Esophagus muscularis mucosa (tissue), 4 donors: ENCODE measurements at regions of chr6 and their contacts with region 1.

Region 1: GRCh38 chr6:43369174-43370022 is at the start of gene ZNF318:
- DNase-seq: peak; percentile 98
- H3K4me3 ChIP-seq: peak within 1 kb of the TSS; percentile 78 to 96 (median 89)
- H3K27ac ChIP-seq: peak within 1 kb of the TSS; percentile 84 to 91 (median 90)
- H3K4me1 ChIP-seq: peaks cover 18 to 37% (median 30%) of the 10 kb centered on the region in 4 donors
- H3K27me3 ChIP-seq: peaks cover 0 to 4% (median 0%) of the 10 kb centered on the region in 4 donors
- CTCF ChIP-seq: peak in 1 of 3 experiments; percentile 8
- EP300 ChIP-seq: no peak
- POLR2A ChIP-seq: no peak
- total RNA-seq, gene ZNF318: 11.1 to 17.3 (median 14.6) TPM

Region 2: GRCh38 chr6:43427406-43428111 is 58.2 kb after region 1 on chr6 and contains the start of gene ABCC10:
- intact Hi-C with region 1: loop called (anchors 5 kb)
- DNase-seq: peak; percentile 98
- H3K4me3 ChIP-seq: peak within 1 kb of the TSS; percentile 77 to 88 (median 85)
- H3K27ac ChIP-seq: peak within 1 kb of the TSS; percentile 82 to 92 (median 88)
- H3K4me1 ChIP-seq: peaks cover 14 to 35% (median 26%) of the 10 kb centered on the region in 4 donors
- H3K27me3 ChIP-seq: no peaks in the 10 kb centered on the region
- CTCF ChIP-seq: peak; percentile 15 to 46 (median 44)
- EP300 ChIP-seq: no peak
- POLR2A ChIP-seq: peak; percentile 4
- total RNA-seq, gene ABCC10: 7.6 to 19.4 (median 12.5) TPM

Region 3: DNA sequence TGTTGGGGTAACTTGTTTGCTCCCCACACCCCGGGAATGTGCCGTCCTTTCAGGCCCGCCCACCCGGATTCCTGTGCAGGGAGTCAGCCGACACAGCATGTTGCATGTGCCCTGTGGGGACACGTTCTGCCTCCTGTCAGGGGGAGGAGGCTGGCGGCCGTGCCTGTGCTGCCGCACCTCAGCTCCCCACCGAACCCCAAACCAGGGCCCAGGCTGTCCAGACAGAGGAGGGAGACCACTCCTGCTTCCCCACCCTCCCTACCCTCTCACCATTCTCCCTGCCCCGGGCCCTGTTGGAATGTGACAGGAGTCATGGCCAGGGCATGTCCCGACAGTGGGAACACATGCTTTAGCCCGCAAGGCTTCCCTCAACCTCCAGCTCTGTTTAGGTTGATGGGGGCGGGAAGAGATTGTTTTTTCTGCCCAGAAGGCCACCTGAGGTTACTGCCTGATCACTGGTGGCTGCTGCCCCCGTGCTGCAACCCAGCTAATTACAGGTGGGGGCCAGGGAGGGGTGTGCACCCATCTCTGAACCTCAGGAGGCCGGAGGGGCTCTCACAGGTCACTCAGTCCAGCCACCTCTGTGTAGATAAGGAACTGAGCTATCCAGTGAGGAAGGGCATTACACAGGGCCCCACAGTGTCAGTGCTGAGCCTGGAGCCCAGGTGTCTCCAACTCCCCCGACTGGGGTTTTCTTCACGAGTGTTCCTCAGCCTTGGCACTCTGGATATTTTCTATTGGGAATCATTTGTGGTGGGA is 127.2 kb after region 1 on chr6:
- intact Hi-C with region 1: loop called (anchors 10 kb)
- DNase-seq: no peak
- H3K4me3 ChIP-seq: no peak overlapping the region
- H3K27ac ChIP-seq: no peak overlapping the region
- H3K4me1 ChIP-seq: peaks cover 30 to 54% (median 46%) of the 10 kb centered on the region in 4 donors
- H3K27me3 ChIP-seq: no peaks in the 10 kb centered on the region
- CTCF ChIP-seq: peak; percentile 38 to 66 (median 60)
- EP300 ChIP-seq: no peak
- POLR2A ChIP-seq: no peak

Region 4: GRCh38 chr6:43604174-43604573 is 234.8 kb after region 1 on chr6:
- intact Hi-C with region 1: no loop called
- DNase-seq: no peak
- H3K4me3 ChIP-seq: no peak overlapping the region
- H3K27ac ChIP-seq: no peak overlapping the region
- H3K4me1 ChIP-seq: peaks cover 0 to 8% (median 2%) of the 10 kb centered on the region in 4 donors
- H3K27me3 ChIP-seq: no peaks in the 10 kb centered on the region
- CTCF ChIP-seq: no peak
- EP300 ChIP-seq: no peak
- POLR2A ChIP-seq: no peak